Left ventricle myocardium inferior (tissue), 1 donor: ENCODE measurements at regions of chr6 and their contacts with region 1.

Region 1: DNA sequence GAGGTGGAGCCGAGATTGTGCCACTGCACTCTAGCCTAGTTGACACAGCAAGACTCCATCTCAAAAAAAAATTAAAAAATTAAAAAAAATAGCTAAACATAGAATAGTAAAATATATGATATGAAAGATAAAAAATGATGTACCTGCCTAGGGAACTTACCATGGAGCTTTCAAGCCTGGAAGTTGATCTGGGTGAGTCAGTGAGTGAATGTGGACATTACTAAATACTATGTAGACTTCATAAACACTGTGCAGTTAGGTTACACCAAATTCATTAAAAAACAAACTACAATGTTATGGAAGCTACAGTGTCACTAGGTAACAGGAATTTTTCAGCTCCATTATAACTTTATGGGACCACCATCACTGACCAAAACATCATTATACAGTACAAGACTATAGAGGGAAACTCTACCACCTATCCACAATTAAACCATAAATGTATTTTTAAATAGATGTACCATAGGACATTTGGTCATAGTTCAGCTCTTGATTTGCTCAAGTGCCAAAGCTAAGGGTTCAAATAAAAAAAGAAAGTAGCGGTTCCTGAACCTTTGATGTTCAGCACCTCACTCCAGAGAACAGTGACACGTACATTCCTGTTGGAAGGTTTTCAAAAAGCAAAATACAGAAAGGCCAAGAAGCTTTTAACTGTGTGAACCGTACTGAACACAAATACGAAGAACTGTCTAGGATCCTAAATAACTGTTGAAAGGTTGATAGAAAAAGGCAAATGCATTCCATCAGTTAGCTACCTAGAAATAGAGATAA is 52.4 kb upstream of the SPDEF start:
- DNase-seq: no peak
- H3K4me3 ChIP-seq: no peak overlapping the region
- H3K27ac ChIP-seq: peak overlapping the region; percentile 55
- H3K4me1 ChIP-seq: peaks cover 36% of the 10 kb centered on the region
- H3K27me3 ChIP-seq: no peaks in the 10 kb centered on the region
- CTCF ChIP-seq: no peak

Region 2: DNA sequence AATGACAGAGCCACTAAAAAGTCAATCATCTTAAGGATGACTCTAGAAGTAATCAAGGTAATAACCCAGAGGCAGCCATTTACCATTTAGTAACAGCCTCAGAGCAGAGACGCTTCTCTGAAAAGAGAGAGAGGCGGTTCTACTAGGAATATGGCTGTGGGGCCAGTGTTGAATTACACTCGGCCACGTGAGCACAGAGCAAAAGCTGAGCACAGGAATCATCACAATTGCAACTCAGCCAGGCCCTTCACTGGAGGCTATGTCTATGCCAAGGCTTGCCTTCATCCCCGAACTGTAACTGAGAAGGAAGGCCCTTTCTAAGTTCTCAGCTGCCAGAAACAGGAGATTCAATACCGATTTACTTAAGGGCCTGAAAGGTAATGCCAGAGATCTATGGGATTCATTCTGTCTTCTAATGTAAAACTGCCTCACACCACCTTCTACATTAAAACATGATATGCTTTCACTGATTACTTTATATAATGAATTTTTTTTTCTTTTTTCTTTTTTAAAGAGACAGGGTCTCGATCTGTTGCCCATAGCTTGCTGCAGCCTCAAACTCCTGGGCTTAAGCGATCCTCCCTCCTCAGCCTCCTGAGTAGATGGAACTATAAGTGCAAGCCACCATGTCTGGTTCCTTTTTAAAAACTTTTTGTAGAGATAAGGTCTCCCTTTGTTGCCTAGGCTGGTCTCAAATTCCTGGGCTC is 283.6 kb before region 1 on chr6:
- intact Hi-C with region 1: no loop called
- DNase-seq: peak; percentile 36
- H3K4me3 ChIP-seq: no peak overlapping the region
- H3K27ac ChIP-seq: peak overlapping the region; percentile 68
- H3K4me1 ChIP-seq: peaks cover 36% of the 10 kb centered on the region
- H3K27me3 ChIP-seq: no peaks in the 10 kb centered on the region
- CTCF ChIP-seq: no peak

Region 3: GRCh38 chr6:34459899-34460593 is 148.5 kb before region 1 on chr6:
- intact Hi-C with region 1: loop called (anchors 5 kb)
- DNase-seq: no peak
- H3K4me3 ChIP-seq: no peak overlapping the region
- H3K27ac ChIP-seq: no peak overlapping the region
- H3K4me1 ChIP-seq: peaks cover 3% of the 10 kb centered on the region
- H3K27me3 ChIP-seq: peaks cover 17% of the 10 kb centered on the region
- CTCF ChIP-seq: peak; percentile 72

Region 4: DNA sequence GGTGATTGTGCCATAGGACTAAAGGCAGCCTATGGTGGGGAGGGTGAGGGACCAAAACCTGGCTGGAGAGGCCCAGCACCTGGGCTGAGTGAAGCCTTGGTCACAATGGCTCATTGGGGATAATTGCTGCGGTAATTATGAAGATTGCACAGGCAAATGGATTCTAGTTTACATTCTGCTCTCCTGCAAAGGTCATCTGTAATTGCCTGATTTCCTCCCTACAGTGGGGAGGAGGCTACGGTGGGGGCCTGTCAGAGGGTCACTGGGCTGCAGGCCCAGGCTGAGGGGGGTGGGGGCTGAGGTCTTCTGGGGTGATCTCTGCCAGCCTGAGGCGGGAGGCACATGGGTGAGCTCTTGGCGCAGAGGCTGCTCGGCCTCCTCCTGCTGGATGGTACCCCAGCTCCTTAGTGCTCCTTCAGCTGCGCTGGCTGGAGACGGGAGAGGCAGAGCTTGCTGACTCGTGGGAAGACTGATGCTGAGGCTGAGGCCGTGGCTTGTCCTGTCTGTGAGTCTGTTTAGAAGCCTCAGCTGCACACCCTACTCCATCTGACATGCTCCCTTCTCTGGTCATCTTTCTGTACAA is 112.3 kb before region 1 on chr6:
- intact Hi-C with region 1: no loop called
- DNase-seq: no peak
- H3K4me3 ChIP-seq: no peak overlapping the region
- H3K27ac ChIP-seq: no peak overlapping the region
- H3K4me1 ChIP-seq: no peaks in the 10 kb centered on the region
- H3K27me3 ChIP-seq: peaks cover 7% of the 10 kb centered on the region
- CTCF ChIP-seq: no peak

Region 5: DNA sequence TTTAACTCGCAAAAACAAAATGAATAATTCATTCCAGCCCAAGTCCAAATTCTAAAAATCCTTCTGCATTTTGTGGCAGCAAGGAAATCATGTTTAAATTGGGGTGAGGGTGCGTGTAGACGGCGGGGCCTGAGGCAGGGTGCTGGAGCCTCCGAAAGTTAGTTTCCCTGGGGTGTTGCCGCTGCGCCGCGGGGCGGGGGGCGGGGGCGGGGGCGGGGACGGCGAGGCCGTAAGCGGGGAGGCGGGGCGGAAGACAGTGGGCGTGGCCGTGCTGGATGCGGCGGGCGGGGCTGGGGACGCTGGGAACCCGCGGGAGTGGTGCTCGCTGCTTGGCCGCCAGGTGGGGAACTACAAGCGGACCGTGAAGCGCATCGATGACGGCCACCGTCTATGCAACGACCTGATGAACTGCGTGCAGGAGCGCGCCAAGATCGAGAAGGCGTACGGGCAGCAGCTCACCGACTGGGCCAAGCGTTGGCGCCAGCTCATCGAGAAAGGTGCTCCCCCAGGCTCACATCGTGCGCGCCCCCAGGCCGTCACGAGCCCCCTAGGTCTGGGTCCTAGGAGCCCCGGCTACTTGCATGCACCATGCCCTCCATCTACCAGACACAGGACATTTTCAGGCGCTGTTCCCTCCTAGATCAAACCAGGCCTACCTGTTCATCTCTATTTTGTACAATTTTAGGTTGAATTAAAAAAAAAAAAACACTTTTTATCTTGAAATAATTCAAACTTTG is 81.3 kb before region 1 on chr6:
- intact Hi-C with region 1: loop called (anchors 5 kb)
- DNase-seq: peak; percentile 96
- H3K4me3 ChIP-seq: peak overlapping the region; percentile 55
- H3K27ac ChIP-seq: peak overlapping the region; percentile 47
- H3K4me1 ChIP-seq: peaks cover 16% of the 10 kb centered on the region
- H3K27me3 ChIP-seq: no peaks in the 10 kb centered on the region
- CTCF ChIP-seq: peak; percentile 87

Region 6: GRCh38 chr6:34656378-34657036 is 48.0 kb after region 1 on chr6:
- intact Hi-C with region 1: no loop called
- DNase-seq: no peak
- H3K4me3 ChIP-seq: peak overlapping the region; percentile 59
- H3K27ac ChIP-seq: peak overlapping the region; percentile 92
- H3K4me1 ChIP-seq: peaks cover 74% of the 10 kb centered on the region
- H3K27me3 ChIP-seq: no peaks in the 10 kb centered on the region
- CTCF ChIP-seq: no peak

Region 7: GRCh38 chr6:34938268-34938667 is 329.8 kb after region 1 on chr6:
- intact Hi-C with region 1: no loop called
- DNase-seq: no peak
- H3K4me3 ChIP-seq: no peak overlapping the region
- H3K27ac ChIP-seq: peak overlapping the region; percentile 84
- H3K4me1 ChIP-seq: peaks cover 80% of the 10 kb centered on the region
- H3K27me3 ChIP-seq: no peaks in the 10 kb centered on the region
- CTCF ChIP-seq: no peak